Thyroid gland (tissue), 4 donors: ENCODE measurements at regions of chr17 and their contacts with region 1.

Region 1: GRCh38 chr17:43024407-43025289 is at the start of gene RND2:
- DNase-seq: peak; percentile 92 to 95
- H3K4me3 ChIP-seq: peak within 1 kb of the TSS; percentile 8 to 42 (median 30)
- H3K27ac ChIP-seq: peak within 1 kb of the TSS; percentile 52 to 80 (median 76)
- H3K4me1 ChIP-seq: peaks cover 8 to 34% of the 10 kb centered on the region in 2 donors
- H3K27me3 ChIP-seq: no peaks in the 10 kb centered on the region
- CTCF ChIP-seq: peak; percentile 54 to 97 (median 86)
- POLR2A ChIP-seq: peak in 1 of 2 donors; percentile 67
- total RNA-seq, gene RND2: 5.2 to 14.8 (median 10.3) TPM

Region 2: DNA sequence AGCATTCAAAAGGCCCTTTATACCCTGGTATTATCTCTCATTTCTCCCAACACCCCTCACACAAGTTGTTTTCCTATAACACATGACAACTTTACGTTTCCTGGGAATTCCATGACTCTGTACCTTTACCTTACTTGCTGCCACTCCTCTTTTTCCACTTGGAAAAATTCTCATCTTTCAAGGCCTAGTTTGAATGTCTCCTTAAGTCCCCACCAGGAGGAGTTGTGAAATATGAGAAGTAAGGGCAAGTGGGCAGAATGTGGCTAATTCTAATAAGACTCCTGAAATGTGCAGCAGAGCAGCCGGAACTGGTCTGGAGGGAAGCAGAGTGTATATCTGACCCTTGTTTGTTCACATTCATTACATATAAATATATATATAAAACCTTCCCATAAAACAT is 60.8 kb after region 1 on chr17:
- intact Hi-C with region 1: no loop called
- DNase-seq: peak; percentile 13 to 18
- H3K4me3 ChIP-seq: no peak overlapping the region
- H3K27ac ChIP-seq: peak overlapping the region; percentile 41 to 67 (median 54)
- H3K4me1 ChIP-seq: peaks cover 14 to 32% of the 10 kb centered on the region in 2 donors
- H3K27me3 ChIP-seq: no peaks in the 10 kb centered on the region
- CTCF ChIP-seq: peak in 4 of 6 experiments; percentile 9 to 47 (median 33)
- POLR2A ChIP-seq: no peak

Region 3: DNA sequence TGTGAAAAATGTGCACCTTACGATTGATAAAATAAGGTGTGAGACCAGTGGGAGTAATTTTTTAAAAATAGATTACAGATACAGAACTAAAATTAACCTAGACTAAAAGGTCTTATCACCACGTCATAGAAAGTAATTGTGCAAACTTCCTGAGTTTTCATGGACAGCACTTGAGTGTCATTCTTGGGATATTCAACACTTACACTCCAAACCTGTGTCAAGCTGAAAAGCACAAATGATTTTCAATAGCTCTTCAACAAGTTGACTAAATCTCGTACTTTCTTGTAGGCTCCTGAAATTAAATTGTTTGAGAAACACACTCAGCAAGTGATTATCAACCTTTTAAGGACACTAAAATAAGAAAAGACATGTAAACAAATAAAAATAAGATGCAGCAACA is 80.0 kb after region 1 on chr17:
- intact Hi-C with region 1: no loop called
- DNase-seq: no peak
- H3K4me3 ChIP-seq: no peak overlapping the region
- H3K27ac ChIP-seq: no peak overlapping the region
- H3K4me1 ChIP-seq: peaks cover 0 to 5% of the 10 kb centered on the region in 2 donors
- H3K27me3 ChIP-seq: no peaks in the 10 kb centered on the region
- CTCF ChIP-seq: no peak
- POLR2A ChIP-seq: no peak

Region 4: GRCh38 chr17:43125133-43125966 is 100.7 kb after region 1 on chr17 and contains the start of gene BRCA1:
- intact Hi-C with region 1: loop called (anchors 2 kb)
- DNase-seq: peak; percentile 95
- H3K4me3 ChIP-seq: peak within 1 kb of the TSS; percentile 29 to 68 (median 59)
- H3K27ac ChIP-seq: peak within 1 kb of the TSS; percentile 32 to 73 (median 65)
- H3K4me1 ChIP-seq: peaks cover 13 to 18% of the 10 kb centered on the region in 2 donors
- H3K27me3 ChIP-seq: no peaks in the 10 kb centered on the region
- CTCF ChIP-seq: no peak
- POLR2A ChIP-seq: peak in 1 of 2 donors; percentile 60
- total RNA-seq, gene BRCA1: 14.4 to 31.9 (median 25.4) TPM